Naive thymus-derived CD4-positive, alpha-beta T cell (primary cell): ENCODE measurements at regions of chr6 and their contacts with region 1.

Region 1: GRCh38 chr6:138987640-138988468 is at the start of gene REPS1:
- DNase-seq: peak; percentile 83 to 97 (median 89)
- ATAC-seq: peak; percentile 95
- H3K4me3 ChIP-seq: peak within 1 kb of the TSS; percentile 61
- H3K4me3 Mint-ChIP-seq: peak within 1 kb of the TSS in 7 of 10 donors; percentile 86 to 94 (median 92)
- H3K27ac ChIP-seq: peak within 1 kb of the TSS; percentile 89
- H3K27ac Mint-ChIP-seq: peak within 1 kb of the TSS; percentile 84 to 96 (median 91)
- H3K4me1 ChIP-seq: peaks cover 32 to 40% of the 10 kb centered on the region in 2 donors
- H3K4me1 Mint-ChIP-seq: peaks cover 7 to 24% (median 13%) of the 10 kb centered on the region in 7 donors
- H3K27me3 ChIP-seq: no peaks in the 10 kb centered on the region
- H3K27me3 Mint-ChIP-seq: peaks cover 0 to 2% (median 0%) of the 10 kb centered on the region in 5 donors
- total RNA-seq, gene REPS1: 55.9 to 74.6 (median 69.7) TPM

Region 2: DNA sequence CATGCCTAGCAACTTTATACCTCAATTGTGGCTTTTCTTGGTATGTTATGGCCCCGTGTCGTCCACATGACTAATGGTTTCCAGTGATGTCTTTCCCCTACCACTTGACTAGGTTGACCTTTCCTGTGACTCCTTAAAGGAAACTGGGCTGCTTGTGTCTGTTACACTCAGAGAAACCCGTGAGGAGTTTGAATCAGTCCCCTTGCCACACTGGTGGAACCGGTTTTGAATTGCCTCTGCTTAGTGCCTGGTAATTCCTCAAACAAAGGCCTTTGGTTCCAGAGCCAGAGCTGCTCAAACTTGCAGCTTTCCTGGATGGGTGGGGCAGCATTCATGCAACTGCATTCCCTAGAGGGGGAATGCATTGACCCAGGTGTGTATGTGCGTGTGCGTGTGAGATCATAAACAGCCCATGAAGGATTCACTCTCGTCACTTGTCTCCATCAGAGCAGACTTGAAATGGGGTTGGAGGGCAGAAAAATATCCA is 170.0 kb before region 1 on chr6:
- CTCF ChIA-PET with region 1: no interaction called
- POLR2A ChIA-PET with region 1: no interaction called
- intact Hi-C with region 1: loop called (anchors 1 kb)
- DNase-seq: peak in 1 of 9 donors; percentile 28
- ATAC-seq: no peak
- H3K4me3 ChIP-seq: no peak overlapping the region
- H3K4me3 Mint-ChIP-seq: no peak overlapping the region
- H3K27ac ChIP-seq: no peak overlapping the region
- H3K27ac Mint-ChIP-seq: peak overlapping the region in 1 of 9 donors; percentile 21
- H3K4me1 ChIP-seq: no peaks in the 10 kb centered on the region
- H3K4me1 Mint-ChIP-seq: peaks cover 0 to 30% (median 0%) of the 10 kb centered on the region in 7 donors
- H3K27me3 ChIP-seq: no peaks in the 10 kb centered on the region
- H3K27me3 Mint-ChIP-seq: no peaks in the 10 kb centered on the region

Region 3: GRCh38 chr6:138973466-138974153 is 14.2 kb before region 1 on chr6:
- CTCF ChIA-PET with region 1: no interaction called
- POLR2A ChIA-PET with region 1: interaction called, 3 read pairs
- intact Hi-C with region 1: loop called in 1 of 2 experiments (anchors 1 kb)
- DNase-seq: no peak
- ATAC-seq: no peak
- H3K4me3 ChIP-seq: no peak overlapping the region
- H3K4me3 Mint-ChIP-seq: peak overlapping the region in 6 of 10 donors; percentile 12 to 55 (median 32)
- H3K27ac ChIP-seq: no peak overlapping the region
- H3K27ac Mint-ChIP-seq: peak overlapping the region in 1 of 9 donors; percentile 3
- H3K4me1 ChIP-seq: peaks cover 21 to 34% of the 10 kb centered on the region in 2 donors
- H3K4me1 Mint-ChIP-seq: peaks cover 28 to 94% (median 88%) of the 10 kb centered on the region in 7 donors
- H3K27me3 ChIP-seq: no peaks in the 10 kb centered on the region
- H3K27me3 Mint-ChIP-seq: no peaks in the 10 kb centered on the region

Region 4: DNA sequence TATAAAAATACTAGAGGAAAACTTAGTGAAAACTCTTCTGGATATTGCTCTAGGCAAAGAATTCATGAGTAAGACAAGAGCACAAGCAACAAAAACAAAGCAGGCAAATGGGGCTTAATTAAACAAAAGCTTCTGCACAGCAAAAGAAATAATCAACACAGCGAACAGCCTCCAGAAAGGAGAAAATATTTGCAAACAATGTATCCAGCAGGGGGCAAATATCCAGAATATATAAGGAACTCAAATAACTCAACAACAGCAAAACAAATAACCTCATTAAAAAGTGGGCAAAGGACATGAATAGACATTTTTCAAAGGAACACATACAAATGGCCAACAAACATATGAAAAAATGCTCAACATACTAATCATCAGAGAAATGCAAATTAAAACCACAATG is 129.9 kb after region 1 on chr6:
- CTCF ChIA-PET with region 1: interaction called, 3 read pairs
- POLR2A ChIA-PET with region 1: interaction called, 5 read pairs
- intact Hi-C with region 1: loop called (anchors 1 to 5 kb)
- DNase-seq: no peak
- ATAC-seq: no peak
- H3K4me3 ChIP-seq: no peak overlapping the region
- H3K4me3 Mint-ChIP-seq: peak overlapping the region in 8 of 10 donors; percentile 14 to 79 (median 50)
- H3K27ac ChIP-seq: no peak overlapping the region
- H3K27ac Mint-ChIP-seq: peak overlapping the region in 8 of 9 donors; percentile 41 to 94 (median 74)
- H3K4me1 ChIP-seq: peaks cover 22 to 45% of the 10 kb centered on the region in 2 donors
- H3K4me1 Mint-ChIP-seq: peaks cover 26 to 59% (median 52%) of the 10 kb centered on the region in 7 donors
- H3K27me3 ChIP-seq: no peaks in the 10 kb centered on the region
- H3K27me3 Mint-ChIP-seq: no peaks in the 10 kb centered on the region

Region 5: GRCh38 chr6:139134817-139135581 is 147.1 kb after region 1 on chr6 and contains the start of gene HECA:
- CTCF ChIA-PET with region 1: interaction called, 3 read pairs
- POLR2A ChIA-PET with region 1: interaction called, 14 read pairs
- intact Hi-C with region 1: loop called in 1 of 2 experiments (anchors 1 kb)
- DNase-seq: peak; percentile 99 to 100 (median 99)
- ATAC-seq: peak; percentile 91
- H3K4me3 ChIP-seq: peak within 1 kb of the TSS; percentile 93
- H3K4me3 Mint-ChIP-seq: peak within 1 kb of the TSS; percentile 84 to 99 (median 93)
- H3K27ac ChIP-seq: peak within 1 kb of the TSS; percentile 100
- H3K27ac Mint-ChIP-seq: peak within 1 kb of the TSS; percentile 95 to 100 (median 99)
- H3K4me1 ChIP-seq: peaks cover 21 to 43% of the 10 kb centered on the region in 2 donors
- H3K4me1 Mint-ChIP-seq: peaks cover 51 to 77% (median 66%) of the 10 kb centered on the region in 7 donors
- H3K27me3 ChIP-seq: no peaks in the 10 kb centered on the region
- H3K27me3 Mint-ChIP-seq: peaks cover 0 to 2% (median 0%) of the 10 kb centered on the region in 5 donors
- total RNA-seq, gene HECA: 54.1 to 145 (median 130) TPM

Region 6: GRCh38 chr6:139173172-139173571 is 185.3 kb after region 1 on chr6:
- CTCF ChIA-PET with region 1: interaction called, 4 read pairs
- POLR2A ChIA-PET with region 1: interaction called, 3 read pairs
- intact Hi-C with region 1: loop called in 1 of 2 experiments (anchors 1 kb)
- DNase-seq: peak in 6 of 9 donors; percentile 31 to 54 (median 40)
- ATAC-seq: peak; percentile 69
- H3K4me3 ChIP-seq: no peak overlapping the region
- H3K4me3 Mint-ChIP-seq: peak overlapping the region; percentile 16 to 75 (median 60)
- H3K27ac ChIP-seq: peak overlapping the region; percentile 49
- H3K27ac Mint-ChIP-seq: peak overlapping the region; percentile 64 to 88 (median 83)
- H3K4me1 ChIP-seq: peaks cover 50 to 85% of the 10 kb centered on the region in 2 donors
- H3K4me1 Mint-ChIP-seq: peaks cover 70 to 95% (median 92%) of the 10 kb centered on the region in 7 donors
- H3K27me3 ChIP-seq: no peaks in the 10 kb centered on the region
- H3K27me3 Mint-ChIP-seq: no peaks in the 10 kb centered on the region

Region 7: DNA sequence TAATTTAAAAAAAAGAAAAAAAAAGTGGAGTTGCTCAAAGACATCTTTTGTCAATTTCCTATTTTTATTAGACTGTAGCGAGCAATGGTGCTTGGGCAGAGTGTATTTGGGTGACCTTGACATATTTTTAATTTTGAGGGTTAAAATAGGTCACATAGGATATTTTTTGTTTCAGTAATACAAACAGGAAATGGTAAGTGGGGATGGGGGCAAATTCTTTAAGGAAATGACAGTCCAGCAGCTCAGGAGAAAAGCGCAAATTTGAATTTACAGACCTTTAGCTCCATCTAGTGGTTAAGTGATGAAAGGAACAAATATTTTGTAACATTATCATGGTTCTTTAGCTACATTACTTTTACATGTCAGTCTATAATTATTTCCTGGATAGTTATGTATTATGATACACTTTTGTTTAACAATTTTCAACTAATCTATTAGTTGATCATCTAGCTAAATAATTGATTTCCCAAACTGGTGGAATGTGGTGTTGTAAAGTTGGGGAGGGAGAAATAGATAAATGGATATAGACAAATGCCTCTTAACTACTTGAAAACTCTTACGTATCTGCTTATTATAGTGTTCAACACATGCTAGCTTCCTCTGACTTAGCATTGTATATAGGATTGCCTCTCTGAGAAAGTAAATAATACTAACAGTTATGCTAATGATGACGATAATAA is 376.6 kb after region 1 on chr6:
- CTCF ChIA-PET with region 1: interaction called, 27 read pairs
- POLR2A ChIA-PET with region 1: interaction called, 9 read pairs
- intact Hi-C with region 1: loop called (anchors 1 kb)
- DNase-seq: peak in 6 of 9 donors; percentile 50 to 74 (median 64)
- ATAC-seq: peak; percentile 81
- H3K4me3 ChIP-seq: no peak overlapping the region
- H3K4me3 Mint-ChIP-seq: peak overlapping the region in 2 of 10 donors; percentile 22 to 34
- H3K27ac ChIP-seq: no peak overlapping the region
- H3K27ac Mint-ChIP-seq: peak overlapping the region; percentile 16 to 88 (median 37)
- H3K4me1 ChIP-seq: peaks cover 0 to 18% of the 10 kb centered on the region in 2 donors
- H3K4me1 Mint-ChIP-seq: peaks cover 17 to 67% (median 53%) of the 10 kb centered on the region in 7 donors
- H3K27me3 ChIP-seq: no peaks in the 10 kb centered on the region
- H3K27me3 Mint-ChIP-seq: peaks cover 0 to 2% (median 0%) of the 10 kb centered on the region in 5 donors